Aorta (tissue), 5 donors: ENCODE measurements at regions of chr3 and their contacts with region 1.

Region 1: GRCh38 chr3:9946112-9947024 is 5.8 kb downstream of the PRRT3 start:
- DNase-seq: peak; percentile 94 to 96
- ATAC-seq: peak; percentile 92
- H3K4me3 ChIP-seq: peak overlapping the region; percentile 7 to 28
- H3K27ac ChIP-seq: peak overlapping the region in 1 of 2 donors; percentile 60
- H3K4me1 ChIP-seq: no peaks in the 10 kb centered on the region
- H3K27me3 ChIP-seq: no peaks in the 10 kb centered on the region

Region 2: DNA sequence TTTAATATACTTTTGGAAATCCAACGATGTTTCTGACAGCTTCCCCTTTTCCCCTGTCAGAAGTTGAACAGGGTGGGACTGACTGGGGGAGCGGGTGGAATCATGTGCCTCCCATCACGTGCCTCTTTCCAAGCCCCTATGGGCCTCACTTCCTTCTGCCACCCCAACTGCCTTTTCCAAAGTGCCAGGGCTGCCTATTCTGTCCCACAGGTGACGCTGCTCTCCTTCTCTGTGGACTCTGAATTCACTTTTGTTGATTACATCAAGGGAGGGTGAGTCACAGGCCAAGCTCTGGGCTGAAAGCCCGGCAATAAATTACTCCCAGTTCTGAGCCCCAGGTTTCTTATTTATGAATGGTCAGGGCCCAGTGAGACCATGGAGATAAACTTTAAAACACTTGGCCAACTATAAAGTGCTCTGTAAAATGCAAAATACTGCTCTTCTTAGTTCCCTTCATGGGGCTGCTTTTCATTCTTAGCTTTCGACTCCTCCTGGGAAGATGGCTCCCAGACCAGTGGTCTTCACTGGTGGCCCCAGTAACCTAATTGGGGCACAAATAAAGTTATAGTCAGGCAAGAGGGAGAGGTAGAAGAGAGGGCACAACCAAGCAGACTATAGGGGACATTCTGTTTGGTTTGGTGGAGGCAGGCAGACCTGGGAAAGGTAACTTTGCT is 230.5 kb before region 1 on chr3:
- intact Hi-C with region 1: loop called in 1 of 2 experiments (anchors 5 kb)
- DNase-seq: peak; percentile 89 to 90
- ATAC-seq: peak; percentile 92
- H3K4me3 ChIP-seq: no peak overlapping the region
- H3K27ac ChIP-seq: peak overlapping the region; percentile 15 to 52
- H3K4me1 ChIP-seq: no peaks in the 10 kb centered on the region
- H3K27me3 ChIP-seq: no peaks in the 10 kb centered on the region

Region 3: DNA sequence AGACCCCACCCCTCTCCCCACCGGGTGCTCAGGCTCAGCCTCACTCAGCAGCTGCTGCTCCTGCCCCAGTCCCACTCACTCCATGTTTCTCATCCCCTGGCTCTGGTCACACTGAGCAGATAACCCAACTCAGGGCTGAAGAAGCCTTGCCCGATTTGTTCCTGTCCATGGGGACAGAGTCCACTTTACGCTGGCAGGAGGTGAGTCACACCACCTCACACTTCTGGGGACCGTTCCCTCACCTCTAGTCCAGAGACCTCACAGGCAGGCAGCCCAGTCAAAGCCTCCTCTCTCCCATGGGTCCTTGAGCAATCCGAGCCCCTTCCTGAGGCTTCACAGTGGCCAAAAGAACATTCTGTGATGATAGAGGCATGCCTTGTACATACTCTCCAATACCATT is 67.7 kb before region 1 on chr3:
- intact Hi-C with region 1: no loop called
- DNase-seq: peak in 1 of 2 donors; percentile 55
- ATAC-seq: no peak
- H3K4me3 ChIP-seq: no peak overlapping the region
- H3K27ac ChIP-seq: no peak overlapping the region
- H3K4me1 ChIP-seq: no peaks in the 10 kb centered on the region
- H3K27me3 ChIP-seq: no peaks in the 10 kb centered on the region

Region 4: DNA sequence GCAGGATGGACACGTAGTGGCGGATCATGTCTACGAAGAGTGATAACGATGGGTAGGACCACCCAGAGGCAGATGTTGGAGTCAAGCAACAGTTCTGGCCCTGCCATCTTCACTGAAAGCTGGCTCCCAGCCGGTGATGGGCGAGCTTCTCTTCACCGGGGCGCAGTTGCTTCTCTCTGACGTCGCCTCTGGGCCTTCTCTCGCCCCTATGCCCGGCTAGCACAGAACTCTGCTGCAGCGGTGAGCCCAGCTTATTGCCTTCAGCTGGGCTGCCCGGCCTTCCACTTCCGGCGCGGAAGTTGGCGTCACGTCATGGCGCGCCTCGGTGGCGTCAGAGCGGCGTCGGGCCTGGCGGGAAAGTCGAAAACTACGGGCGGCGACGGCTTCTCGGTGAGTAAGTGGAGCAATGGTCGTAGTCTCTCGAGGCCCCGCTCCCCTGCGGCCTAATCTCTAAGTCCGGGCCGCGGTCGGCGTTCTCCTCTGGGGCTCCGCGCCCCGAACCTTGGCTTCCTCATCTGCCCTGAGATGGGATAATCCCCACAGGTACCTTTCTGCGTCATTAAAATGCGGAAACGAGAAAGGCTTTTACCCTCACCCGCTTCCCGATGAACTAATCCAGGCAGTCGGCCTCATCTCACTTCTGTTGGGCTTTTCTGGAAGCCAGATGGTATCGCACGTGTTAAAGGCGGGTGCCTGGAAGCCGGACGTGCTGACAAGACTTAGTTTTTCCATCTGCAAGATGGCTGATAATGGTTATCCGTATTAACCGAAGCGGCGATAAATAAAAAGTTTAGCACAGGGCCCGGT is 79.9 kb after region 1 on chr3 and contains the start of gene FANCD2:
- intact Hi-C with region 1: no loop called
- DNase-seq: peak; percentile 93 to 97
- ATAC-seq: peak; percentile 95
- H3K4me3 ChIP-seq: peak within 1 kb of the TSS; percentile 45 to 72
- H3K27ac ChIP-seq: peak within 1 kb of the TSS in 1 of 2 donors; percentile 17
- H3K4me1 ChIP-seq: no peaks in the 10 kb centered on the region
- H3K27me3 ChIP-seq: no peaks in the 10 kb centered on the region
- total RNA-seq, gene FANCD2: 1.9 to 5.4 TPM